ENCODE measurements at regions of chr18 and their contacts with region 1.

Region 1: DNA sequence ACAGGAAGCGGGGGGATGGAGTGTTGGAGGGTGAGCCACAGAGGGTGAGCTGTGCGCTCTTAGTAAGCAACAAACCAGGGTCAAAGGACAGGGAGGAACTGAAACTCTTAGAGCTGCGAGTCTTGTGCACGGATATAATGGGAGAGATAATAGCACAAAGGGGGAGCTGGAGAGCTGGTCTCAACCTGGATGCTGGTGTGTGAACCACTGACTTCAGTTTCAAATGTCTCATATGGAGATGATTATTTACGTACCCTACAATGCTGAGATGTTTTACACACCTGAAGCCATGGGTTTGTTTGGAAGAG is 35.9 kb downstream of the PTGR3 start:
- DNase-seq: peak in 3 of 9 experiments; percentile 20 to 45 (median 30)
- ATAC-seq: peak; percentile 31
- H3K4me3 ChIP-seq: no peak overlapping the region
- H3K4me3 Mint-ChIP-seq: no peak overlapping the region
- H3K27ac ChIP-seq: no peak overlapping the region
- H3K27ac Mint-ChIP-seq: no peak overlapping the region
- H3K4me1 ChIP-seq: no peaks in the 10 kb centered on the region
- H3K4me1 Mint-ChIP-seq: peaks cover 11% of the 10 kb centered on the region
- H3K27me3 ChIP-seq: no peaks in the 10 kb centered on the region
- H3K27me3 Mint-ChIP-seq: no peaks in the 10 kb centered on the region
- CTCF ChIP-seq: no peak

Region 2: GRCh38 chr18:75189696-75190095 is 16.6 kb after region 1 on chr18:
- CTCF ChIA-PET with region 1: no interaction called
- POLR2A ChIA-PET with region 1: no interaction called
- intact Hi-C with region 1: no loop called
- DNase-seq: no peak
- ATAC-seq: no peak
- H3K4me3 ChIP-seq: no peak overlapping the region
- H3K4me3 Mint-ChIP-seq: no peak overlapping the region
- H3K27ac ChIP-seq: no peak overlapping the region
- H3K27ac Mint-ChIP-seq: no peak overlapping the region
- H3K4me1 ChIP-seq: no peaks in the 10 kb centered on the region
- H3K4me1 Mint-ChIP-seq: no peaks in the 10 kb centered on the region
- H3K27me3 ChIP-seq: no peaks in the 10 kb centered on the region
- H3K27me3 Mint-ChIP-seq: peaks cover 2% of the 10 kb centered on the region
- CTCF ChIP-seq: no peak

Region 3: DNA sequence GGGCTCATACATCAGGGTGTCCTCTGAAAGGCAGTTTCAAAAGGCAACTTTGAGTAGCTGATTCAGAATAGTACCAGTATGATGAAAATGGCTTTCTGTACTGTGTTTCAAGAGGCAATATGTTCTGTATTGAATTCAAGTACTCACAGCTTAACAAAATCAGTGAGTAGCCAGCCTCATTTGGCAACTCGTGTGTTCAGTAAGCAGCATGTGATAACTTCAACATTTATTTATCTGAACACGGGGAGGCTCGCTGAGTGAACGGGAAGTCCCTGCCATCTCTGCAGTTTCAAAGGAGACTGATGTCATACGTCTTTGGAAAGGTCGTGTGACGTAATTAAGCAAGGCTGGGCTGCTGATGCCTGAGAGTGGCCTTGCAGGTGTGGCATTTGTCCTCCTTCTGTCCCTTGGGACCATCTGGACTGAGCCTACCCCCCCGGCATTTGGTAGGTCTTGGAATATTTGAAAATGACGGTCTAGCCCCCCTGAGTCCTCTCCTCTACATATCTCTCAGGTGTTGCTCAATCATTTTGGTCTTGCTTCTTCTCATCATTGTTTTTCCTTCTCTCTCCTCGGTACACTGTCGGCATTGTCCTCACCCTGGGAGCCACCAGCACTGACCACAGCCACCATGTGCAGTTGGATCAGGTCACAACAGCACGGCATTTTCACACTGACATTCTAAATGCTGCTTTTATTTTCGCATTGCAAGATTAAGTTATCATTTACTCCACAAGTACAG is 191.6 kb after region 1 on chr18:
- CTCF ChIA-PET with region 1: no interaction called
- POLR2A ChIA-PET with region 1: no interaction called
- intact Hi-C with region 1: loop called (anchors 5 kb)
- DNase-seq: no peak
- ATAC-seq: no peak
- H3K4me3 ChIP-seq: no peak overlapping the region
- H3K4me3 Mint-ChIP-seq: no peak overlapping the region
- H3K27ac ChIP-seq: no peak overlapping the region
- H3K27ac Mint-ChIP-seq: no peak overlapping the region
- H3K4me1 ChIP-seq: no peaks in the 10 kb centered on the region
- H3K4me1 Mint-ChIP-seq: no peaks in the 10 kb centered on the region
- H3K27me3 ChIP-seq: peaks cover 0 to 4% of the 10 kb centered on the region in 2 experiments
- H3K27me3 Mint-ChIP-seq: peaks cover 2% of the 10 kb centered on the region
- CTCF ChIP-seq: no peak

Region 4: DNA sequence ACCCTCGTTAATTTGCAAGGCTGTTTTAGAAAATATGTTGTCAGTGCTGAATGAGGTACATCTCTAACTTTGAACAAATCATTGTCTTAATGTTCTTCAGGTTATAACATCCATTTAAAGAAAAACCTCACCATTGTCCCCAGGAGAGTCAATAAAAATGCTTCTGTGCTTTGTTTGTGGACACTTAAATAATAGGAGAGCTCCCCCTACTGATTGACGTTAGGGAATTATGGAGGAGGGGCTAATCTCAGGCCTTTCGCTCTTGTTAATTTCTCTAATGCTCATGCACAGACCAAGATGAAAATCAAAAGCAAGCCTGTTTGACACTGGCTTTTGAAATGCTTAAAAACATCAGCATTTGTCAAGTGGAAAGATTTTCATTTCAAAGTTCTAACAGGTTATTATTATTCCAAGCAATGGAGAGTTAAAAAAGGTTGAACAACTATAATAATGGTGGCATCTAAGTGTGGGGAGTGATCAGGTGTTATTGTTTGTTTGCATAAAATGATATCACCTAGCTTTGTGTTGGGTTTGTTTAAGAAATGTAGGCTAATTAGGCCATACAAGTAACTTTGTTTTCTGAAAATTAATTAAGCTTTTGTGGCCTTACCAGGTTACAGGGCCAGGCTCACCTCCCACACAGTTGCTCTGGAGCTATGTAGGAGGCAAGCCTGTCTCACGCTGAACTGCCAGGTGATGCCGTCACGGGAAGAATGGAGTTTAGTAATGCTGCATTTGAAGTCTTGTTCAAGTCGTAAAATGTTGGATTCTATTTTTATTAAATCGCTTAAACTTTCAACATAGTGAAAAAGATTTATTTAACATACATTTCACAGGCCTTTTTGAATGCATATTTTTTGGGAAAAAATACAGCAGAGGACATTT is 306.2 kb after region 1 on chr18:
- CTCF ChIA-PET with region 1: interaction called, 4 read pairs
- POLR2A ChIA-PET with region 1: no interaction called
- intact Hi-C with region 1: loop called in 1 of 2 experiments (anchors 10 kb)
- DNase-seq: peak in 2 of 9 experiments; percentile 54 to 65
- ATAC-seq: no peak
- H3K4me3 ChIP-seq: no peak overlapping the region
- H3K4me3 Mint-ChIP-seq: no peak overlapping the region
- H3K27ac ChIP-seq: no peak overlapping the region
- H3K27ac Mint-ChIP-seq: no peak overlapping the region
- H3K4me1 ChIP-seq: no peaks in the 10 kb centered on the region
- H3K4me1 Mint-ChIP-seq: peaks cover 2% of the 10 kb centered on the region
- H3K27me3 ChIP-seq: no peaks in the 10 kb centered on the region
- H3K27me3 Mint-ChIP-seq: peaks cover 4% of the 10 kb centered on the region
- CTCF ChIP-seq: peak; percentile 41

Measured in CD8-positive, alpha-beta T cell (primary cell).